ENCODE measurements at regions of chr7 and their contacts with region 1.

Region 1: DNA sequence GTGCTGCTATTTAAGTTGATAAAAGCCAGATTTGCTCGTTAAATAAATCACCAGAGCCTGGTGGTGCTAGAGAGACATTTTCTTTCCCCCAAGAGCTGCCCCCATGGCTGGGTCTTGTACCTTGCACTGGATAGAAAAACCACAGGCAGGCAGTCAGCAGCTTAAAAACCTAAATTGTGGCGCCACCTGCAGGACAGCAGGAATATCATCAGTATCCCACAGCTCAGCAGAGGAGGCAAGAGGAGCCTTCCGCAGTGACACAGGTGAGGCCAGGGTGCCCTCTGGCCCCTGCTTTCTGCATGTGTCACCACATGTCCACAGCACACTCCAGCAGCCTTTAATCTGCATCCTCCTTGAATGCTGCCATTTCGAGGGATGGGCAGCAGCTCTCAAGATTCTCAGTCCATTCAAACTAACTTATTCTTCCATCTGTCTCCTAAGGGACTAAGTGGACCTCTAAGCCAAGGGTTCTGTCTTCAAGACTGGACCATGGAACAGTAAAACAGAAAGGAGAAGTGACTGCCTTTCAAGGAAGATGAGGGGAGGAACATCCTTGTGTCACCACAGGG is 4.5 kb upstream of the PLXNA4 start:
- DNase-seq: peak; percentile 21
- H3K4me3 ChIP-seq: no peak overlapping the region
- CTCF ChIP-seq: peak; percentile 81

Region 2: DNA sequence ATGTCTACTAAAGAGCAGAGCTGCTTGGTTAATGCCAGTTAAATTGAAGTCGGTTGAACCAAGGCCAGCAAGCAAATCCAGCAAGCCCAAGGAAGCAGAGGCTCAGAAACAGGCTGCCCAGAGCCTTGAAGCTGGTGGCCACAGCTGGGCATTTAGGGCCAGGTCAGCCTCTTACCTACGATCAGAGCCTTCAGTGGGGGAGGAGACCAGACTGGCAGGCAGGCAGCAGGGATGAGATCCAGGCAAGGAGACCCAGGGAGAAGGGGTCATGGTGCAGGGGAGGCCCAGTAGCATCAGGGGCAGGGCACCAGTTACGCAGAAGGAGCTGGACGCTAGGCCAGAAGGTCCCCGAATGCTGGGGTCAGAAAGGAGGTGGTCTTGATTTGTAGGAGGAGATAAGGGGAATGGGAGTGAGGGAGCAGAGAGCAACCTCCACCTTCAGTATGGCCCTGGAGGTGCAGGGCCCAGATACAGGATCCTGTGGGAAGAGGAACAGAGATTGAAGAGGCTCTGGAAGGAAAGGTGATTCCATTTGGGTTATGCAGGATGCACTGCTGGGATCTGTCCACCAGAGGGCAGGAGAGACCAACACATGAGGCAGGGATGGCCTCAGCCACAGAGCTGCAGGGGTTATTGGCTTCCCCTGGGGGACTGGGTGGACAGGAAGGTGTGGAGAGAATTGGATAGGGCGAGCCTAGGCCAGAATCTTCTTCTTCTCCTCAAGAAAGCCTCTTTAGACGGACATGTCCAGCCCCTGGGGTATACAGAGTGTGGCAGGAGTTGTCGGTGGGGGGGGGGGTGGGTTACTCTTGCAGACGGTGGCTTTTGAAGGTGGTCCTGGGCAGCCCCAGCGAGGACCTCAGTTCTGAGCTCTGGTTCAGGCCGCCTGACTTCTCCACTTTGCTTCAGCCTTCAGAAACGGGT is 891.8 kb before region 1 on chr7:
- CTCF ChIA-PET with region 1: interaction called, 54 read pairs
- POLR2A ChIA-PET with region 1: no interaction called
- DNase-seq: no peak
- H3K4me3 ChIP-seq: no peak overlapping the region
- CTCF ChIP-seq: peak; percentile 92

Region 3: DNA sequence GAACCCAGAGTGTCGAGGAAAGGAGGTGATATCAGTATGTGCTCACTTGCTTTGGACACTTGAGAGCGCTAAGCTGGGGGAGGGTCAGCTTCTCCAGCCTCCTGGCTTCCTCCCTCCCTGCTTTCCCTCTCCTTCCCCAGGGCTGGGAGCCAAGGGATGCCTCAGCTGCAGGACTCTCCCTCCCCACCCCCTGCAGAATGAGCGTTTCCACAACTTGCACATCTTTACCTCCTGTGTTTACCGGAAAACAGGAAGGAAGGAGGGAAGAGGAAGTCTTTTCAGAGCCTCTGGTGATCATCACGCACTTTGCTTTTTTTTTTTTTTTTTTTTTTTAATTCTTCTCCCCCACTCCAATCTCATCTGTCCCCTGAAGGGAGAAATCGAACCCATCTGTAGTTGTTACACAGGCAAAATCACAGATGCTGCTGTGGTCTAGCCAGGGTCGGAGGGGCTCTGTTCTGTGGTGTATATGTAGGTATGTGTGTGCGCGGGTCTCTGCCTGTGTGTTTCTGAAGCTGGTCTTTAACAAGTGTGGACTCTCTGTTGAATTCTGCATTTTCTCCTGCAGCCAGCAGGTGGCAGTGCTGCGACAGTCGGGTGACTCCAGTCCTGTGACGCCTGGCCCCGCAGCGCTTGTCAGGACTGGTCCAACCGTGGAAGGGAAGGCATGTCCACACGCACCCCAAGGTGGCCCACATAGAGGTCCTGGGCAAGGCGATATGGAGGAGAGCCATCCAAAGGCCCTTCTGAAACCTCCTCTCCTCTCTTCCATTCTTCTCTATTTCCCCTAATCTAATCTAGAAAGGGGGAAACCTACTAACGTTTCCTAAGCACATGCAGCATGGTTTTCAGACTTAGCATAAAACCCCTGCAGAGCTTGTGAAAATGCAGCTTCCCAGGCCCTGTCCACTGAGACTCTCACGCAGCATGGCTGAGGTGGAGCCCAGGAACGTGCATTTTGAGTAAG is 262.2 kb before region 1 on chr7:
- CTCF ChIA-PET with region 1: interaction called, 59 read pairs
- POLR2A ChIA-PET with region 1: interaction called, 3 read pairs
- DNase-seq: peak; percentile 16
- H3K4me3 ChIP-seq: no peak overlapping the region
- CTCF ChIP-seq: peak; percentile 89

Region 4: DNA sequence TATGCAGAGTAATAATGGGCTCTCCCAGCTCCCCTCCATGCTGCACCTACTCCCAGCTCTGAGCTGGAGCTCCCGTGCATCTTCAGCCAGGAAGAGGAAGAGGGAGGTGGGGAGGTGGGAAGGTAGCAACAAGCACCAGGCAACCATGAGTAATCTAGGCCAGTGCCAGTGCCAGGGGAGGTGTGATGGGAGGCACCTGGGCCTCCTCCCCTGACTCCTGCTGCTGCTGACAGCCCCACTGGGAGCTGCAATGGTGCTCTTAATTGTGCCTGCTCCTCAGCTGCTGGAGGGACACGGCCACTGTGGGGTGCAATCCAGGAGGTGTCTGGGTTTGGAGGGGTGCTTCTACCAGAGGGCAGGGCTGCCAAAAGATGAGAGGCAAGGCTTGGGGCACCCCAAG is 247.5 kb before region 1 on chr7:
- CTCF ChIA-PET with region 1: interaction called, 12 read pairs
- POLR2A ChIA-PET with region 1: no interaction called
- DNase-seq: no peak
- H3K4me3 ChIP-seq: no peak overlapping the region
- CTCF ChIP-seq: no peak

Region 5: DNA sequence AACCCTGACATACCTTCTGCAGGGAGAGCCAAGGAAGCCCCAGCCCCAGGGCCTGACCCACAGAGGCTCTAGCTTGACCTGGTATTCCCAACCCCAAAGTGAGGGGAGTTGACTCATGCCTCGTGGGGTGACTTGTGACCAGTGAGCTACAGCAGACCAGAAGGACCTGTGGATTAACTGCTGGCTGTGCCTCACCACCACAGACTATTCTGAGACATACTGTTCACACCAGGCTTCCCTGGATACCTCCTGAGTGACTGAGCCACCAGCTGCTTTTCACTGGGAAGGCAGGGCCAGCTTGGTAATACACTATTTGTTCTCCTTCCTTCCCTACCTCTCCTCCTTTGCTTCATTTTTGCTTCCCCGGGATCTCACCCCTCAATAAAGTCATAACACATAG is 11.8 kb before region 1 on chr7:
- CTCF ChIA-PET with region 1: interaction called, 15 read pairs
- POLR2A ChIA-PET with region 1: no interaction called
- DNase-seq: no peak
- H3K4me3 ChIP-seq: no peak overlapping the region
- CTCF ChIP-seq: no peak

Region 6: DNA sequence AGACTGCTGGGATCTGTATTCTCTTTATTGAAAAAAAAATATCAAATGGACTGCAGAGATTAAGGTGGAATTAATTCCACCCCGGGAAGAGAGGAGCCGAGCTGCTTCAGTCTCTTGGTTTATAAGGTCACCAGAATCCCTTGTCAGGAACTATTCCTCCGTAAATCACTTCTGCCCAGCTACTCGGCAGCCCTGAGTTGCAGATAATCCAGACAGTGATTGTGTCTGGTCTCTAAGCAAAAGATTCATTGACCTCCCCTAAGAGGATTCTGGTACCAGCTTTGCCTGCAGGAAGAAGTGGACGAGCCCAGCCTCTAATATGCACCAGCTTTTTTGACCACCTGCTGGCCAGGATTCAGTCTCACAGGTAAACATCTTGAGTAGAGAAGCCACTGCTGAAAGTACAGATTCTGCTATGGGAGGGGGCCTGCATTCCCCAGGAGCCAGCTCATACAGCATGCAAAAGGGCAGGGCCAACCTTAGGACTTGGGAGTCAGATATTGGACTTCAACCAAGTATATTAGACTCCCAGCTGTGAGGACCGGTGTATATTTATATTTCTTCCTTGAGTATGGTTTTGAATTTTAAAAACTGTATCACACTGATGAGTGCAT is 22.5 kb after region 1 on chr7:
- CTCF ChIA-PET with region 1: interaction called, 13 read pairs
- POLR2A ChIA-PET with region 1: no interaction called
- DNase-seq: no peak
- H3K4me3 ChIP-seq: no peak overlapping the region
- CTCF ChIP-seq: no peak